Psoas muscle (tissue), 8 donors: ENCODE measurements at regions of chr1 and their contacts with region 1.

Region 1: DNA sequence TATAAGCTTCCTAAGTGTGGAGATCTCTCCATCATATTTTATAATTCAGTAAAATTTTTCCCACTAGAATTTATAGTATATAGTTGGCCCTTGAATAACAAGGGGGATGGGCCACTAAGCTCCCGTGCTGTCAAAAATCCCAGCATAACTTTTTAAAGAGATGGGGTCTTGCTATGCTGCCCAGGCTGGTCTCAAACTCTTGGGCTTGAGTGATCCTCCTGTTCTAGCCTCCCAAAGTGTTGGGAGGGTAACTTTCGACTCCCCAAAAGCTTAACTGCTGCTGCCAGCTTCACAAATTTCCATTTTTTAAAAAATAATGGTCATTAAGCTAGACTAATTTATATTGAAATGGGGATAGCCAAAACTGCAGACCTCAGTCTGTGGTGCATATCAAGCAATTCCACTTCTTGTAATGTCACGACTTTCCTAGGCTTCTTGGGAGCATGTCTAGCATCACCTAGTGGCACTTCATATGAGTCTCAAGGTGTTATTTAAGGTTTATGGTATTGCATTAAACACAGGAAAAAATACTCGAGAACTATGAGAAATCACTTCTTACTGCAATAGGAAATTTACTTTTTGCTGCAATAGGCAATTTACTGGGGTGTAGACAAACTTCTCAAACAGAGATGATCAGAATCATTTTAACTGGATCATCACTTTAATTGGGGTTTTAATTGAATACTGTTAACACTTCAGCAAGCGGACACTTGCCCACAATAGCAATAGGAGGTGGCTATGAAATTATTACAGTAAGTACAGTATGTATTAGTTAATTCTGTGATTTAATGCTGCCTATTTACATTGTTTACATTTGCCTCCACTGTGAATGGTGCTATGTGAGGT is 19.3 kb upstream of the ACTA1 start:
- DNase-seq: no peak
- ATAC-seq: peak in 3 of 4 donors; percentile 70 to 89 (median 85)
- H3K4me3 ChIP-seq: no peak overlapping the region
- H3K27ac ChIP-seq: no peak overlapping the region
- H3K4me1 ChIP-seq: no peaks in the 10 kb centered on the region
- H3K27me3 ChIP-seq: no peaks in the 10 kb centered on the region
- CTCF ChIP-seq: peak; percentile 60

Region 2: DNA sequence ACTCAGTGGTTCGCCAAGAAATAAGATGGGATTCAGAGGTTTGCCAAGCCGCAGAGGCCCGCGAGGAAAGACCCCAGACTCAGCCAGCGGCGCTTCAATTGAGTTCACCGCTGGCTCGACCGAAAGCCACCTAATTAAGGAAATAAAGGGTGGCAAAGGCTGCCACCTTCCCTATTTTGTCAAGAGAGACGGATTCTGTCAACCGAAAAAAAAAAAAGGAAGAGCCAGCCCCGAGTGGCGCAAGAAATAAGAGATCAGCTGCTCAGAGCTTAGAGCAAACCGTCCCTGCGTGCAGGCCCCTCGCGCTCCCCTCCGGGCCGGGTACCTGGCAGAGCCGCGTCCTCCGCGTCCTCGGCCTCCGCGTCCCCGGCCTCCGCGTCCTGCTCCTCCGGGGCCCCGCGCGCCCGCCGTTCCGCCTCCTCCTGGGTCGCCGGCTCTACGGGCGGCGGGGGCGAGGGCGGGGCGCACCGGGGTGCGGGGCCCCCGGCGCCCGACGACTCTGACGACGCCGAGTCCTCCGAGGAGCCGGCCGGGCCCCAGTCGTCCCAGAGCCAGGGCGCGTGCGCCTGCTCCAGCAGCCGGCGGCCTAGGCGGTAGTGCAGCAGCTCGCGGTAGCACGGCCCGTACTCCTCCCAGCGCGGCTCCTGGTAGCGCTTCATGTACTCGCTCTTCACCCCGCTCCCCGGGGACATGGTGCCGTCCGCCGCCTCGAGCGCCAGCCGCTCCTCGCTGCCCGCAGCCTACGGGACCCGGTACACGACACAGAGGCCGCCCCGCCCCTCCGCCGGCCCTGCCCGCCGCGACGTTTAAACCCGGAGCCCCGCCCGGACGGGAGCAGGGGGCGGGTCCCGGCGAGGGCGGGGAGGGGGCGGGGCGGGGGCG is 111.2 kb before region 1 on chr1:
- intact Hi-C with region 1: loop called in 1 of 2 experiments (anchors 10 kb)
- DNase-seq: peak; percentile 84 to 92
- ATAC-seq: peak; percentile 96 to 98 (median 98)
- H3K4me3 ChIP-seq: peak overlapping the region; percentile 90
- H3K27ac ChIP-seq: peak overlapping the region; percentile 87
- H3K4me1 ChIP-seq: peaks cover 9% of the 10 kb centered on the region
- H3K27me3 ChIP-seq: no peaks in the 10 kb centered on the region
- CTCF ChIP-seq: no peak

Region 3: DNA sequence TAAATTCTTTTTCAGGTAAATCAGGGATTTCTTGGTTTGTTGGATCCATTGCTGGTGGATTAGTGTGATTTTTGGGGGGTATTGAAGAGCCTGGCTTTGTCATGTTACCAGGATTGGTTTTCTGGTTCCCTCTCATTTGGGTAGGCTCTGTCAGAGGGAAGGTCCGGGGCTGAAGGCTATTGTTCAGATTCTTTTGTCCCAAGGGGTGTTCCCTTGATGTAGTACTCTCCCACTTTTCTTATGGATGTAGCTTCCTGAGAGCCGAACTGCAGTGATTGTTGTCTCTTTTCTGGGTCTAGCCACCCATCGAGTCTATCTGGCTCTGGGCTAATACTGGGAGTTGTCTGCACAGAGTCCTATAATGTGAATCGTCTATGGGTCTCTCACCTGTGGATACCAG is 92.8 kb before region 1 on chr1:
- intact Hi-C with region 1: no loop called
- DNase-seq: no peak
- ATAC-seq: no peak
- H3K4me3 ChIP-seq: no peak overlapping the region
- H3K27ac ChIP-seq: no peak overlapping the region
- H3K4me1 ChIP-seq: no peaks in the 10 kb centered on the region
- H3K27me3 ChIP-seq: peaks cover 0 to 2% (median 0%) of the 10 kb centered on the region in 3 donors
- CTCF ChIP-seq: no peak

Region 4: DNA sequence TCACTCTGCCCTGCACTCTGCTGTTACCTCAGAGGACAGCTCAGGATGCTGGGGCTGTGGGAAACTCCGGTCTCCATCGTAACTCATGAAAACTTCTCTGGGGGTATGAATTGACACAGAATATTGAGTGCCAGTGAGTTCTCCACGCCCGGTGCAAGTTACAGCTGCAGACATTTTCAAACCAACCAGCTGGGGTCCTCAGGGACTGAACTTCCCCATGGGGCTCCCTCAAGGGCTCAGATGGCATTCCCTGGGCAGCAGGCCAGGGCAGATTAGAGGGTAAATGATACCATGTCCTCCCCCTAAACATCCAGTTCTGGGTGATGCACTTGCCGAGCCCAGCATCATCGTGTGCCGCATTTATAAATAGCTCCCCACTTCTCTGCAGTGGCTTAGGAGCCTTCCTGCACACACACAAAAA is 82.6 kb before region 1 on chr1:
- intact Hi-C with region 1: loop called in 1 of 2 experiments (anchors 5 kb)
- DNase-seq: peak; percentile 76 to 92
- ATAC-seq: peak; percentile 88 to 97 (median 96)
- H3K4me3 ChIP-seq: no peak overlapping the region
- H3K27ac ChIP-seq: peak overlapping the region; percentile 1
- H3K4me1 ChIP-seq: peaks cover 18% of the 10 kb centered on the region
- H3K27me3 ChIP-seq: no peaks in the 10 kb centered on the region
- CTCF ChIP-seq: peak; percentile 17